Natural killer cell (primary cell): ENCODE measurements at regions of chr14 and their contacts with region 1.

Region 1: GRCh38 chr14:104708606-104709268 is 15.3 kb upstream of the ADSS1 start:
- DNase-seq: peak; percentile 66 to 85
- ATAC-seq: peak; percentile 80 to 100 (median 93)
- H3K4me3 ChIP-seq: no peak overlapping the region
- H3K4me3 Mint-ChIP-seq: no peak overlapping the region
- H3K27ac ChIP-seq: no peak overlapping the region
- H3K27ac Mint-ChIP-seq: peak overlapping the region in 1 of 2 donors; percentile 48
- H3K4me1 ChIP-seq: peaks cover 4% of the 10 kb centered on the region
- H3K4me1 Mint-ChIP-seq: peaks cover 0 to 6% of the 10 kb centered on the region in 2 donors
- H3K27me3 ChIP-seq: no peaks in the 10 kb centered on the region
- H3K27me3 Mint-ChIP-seq: no peaks in the 10 kb centered on the region
- CTCF ChIP-seq: peak; percentile 97

Region 2: GRCh38 chr14:104650057-104650981 is 58.4 kb before region 1 on chr14:
- intact Hi-C with region 1: loop called (anchors 1 kb)
- DNase-seq: peak; percentile 63 to 80
- ATAC-seq: peak; percentile 73 to 94 (median 89)
- H3K4me3 ChIP-seq: peak overlapping the region; percentile 14
- H3K4me3 Mint-ChIP-seq: no peak overlapping the region
- H3K27ac ChIP-seq: no peak overlapping the region
- H3K27ac Mint-ChIP-seq: no peak overlapping the region
- H3K4me1 ChIP-seq: peaks cover 11% of the 10 kb centered on the region
- H3K4me1 Mint-ChIP-seq: no peaks in the 10 kb centered on the region
- H3K27me3 ChIP-seq: peaks cover 3% of the 10 kb centered on the region
- H3K27me3 Mint-ChIP-seq: peaks cover 9 to 14% of the 10 kb centered on the region in 2 donors
- CTCF ChIP-seq: peak; percentile 97